Right ventricle myocardium superior (tissue), 1 donor: ENCODE measurements at regions of chr17 and their contacts with region 1.

Region 1: GRCh38 chr17:13002766-13003451 is 14.9 kb downstream of the ELAC2 start:
- DNase-seq: peak; percentile 89
- ATAC-seq: peak; percentile 95

Region 2: GRCh38 chr17:12180644-12181261 is 822.2 kb before region 1 on chr17:
- intact Hi-C with region 1: loop called (anchors 10 kb)
- DNase-seq: no peak
- ATAC-seq: peak; percentile 64

Region 3: GRCh38 chr17:12256380-12256995 is 746.4 kb before region 1 on chr17:
- intact Hi-C with region 1: loop called (anchors 10 kb)
- DNase-seq: no peak
- ATAC-seq: peak; percentile 84

Region 4: GRCh38 chr17:13078591-13079385 is 75.9 kb after region 1 on chr17:
- intact Hi-C with region 1: no loop called
- DNase-seq: no peak
- ATAC-seq: no peak

Region 5: DNA sequence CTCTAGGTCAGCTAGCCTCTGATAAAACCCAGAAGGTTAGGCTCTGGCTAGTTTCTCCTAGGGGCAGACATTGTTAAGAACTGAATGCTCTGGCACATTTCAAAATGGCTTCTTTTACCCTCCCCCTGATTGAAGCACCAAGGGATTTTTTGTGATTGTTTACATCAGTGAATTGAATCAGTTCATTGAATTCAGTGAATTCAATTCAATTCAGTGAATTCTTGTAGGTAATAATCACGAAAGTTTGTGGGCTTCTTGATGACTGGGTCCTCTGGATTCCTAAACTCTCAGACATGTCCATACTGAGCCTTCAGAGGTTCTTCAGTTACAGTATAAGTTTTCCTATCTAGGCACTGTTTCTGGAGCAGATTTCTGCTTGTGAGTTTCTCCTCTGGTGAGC is 150.1 kb after region 1 on chr17:
- intact Hi-C with region 1: no loop called
- DNase-seq: no peak
- ATAC-seq: no peak